ENCODE measurements at regions of chr11 and their contacts with region 1.

Region 1: GRCh38 chr11:11895672-11896071 is 53.9 kb downstream of the USP47 start:
- DNase-seq: no peak

Region 2: DNA sequence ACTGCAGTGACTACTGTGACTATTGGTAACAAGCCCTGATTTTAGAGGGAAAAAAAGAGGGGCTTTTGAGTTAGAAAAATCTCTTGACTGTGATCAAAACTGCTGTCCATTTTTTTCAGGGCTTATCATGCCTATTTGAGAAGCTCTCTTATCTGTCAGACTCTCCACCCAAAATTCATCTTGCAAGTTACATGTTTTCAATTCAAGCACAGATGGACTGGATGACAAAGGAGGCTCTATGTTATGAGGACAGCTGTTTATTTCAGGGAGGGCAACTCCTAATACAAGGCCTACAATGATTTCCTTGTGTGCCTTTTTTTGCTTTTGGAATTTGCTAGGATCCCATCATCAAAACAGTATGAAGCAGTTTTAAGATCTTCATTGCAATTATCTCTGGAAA is 89.1 kb before region 1 on chr11:
- intact Hi-C with region 1: loop called in 1 of 2 experiments (anchors 10 kb)
- DNase-seq: no peak

Region 3: DNA sequence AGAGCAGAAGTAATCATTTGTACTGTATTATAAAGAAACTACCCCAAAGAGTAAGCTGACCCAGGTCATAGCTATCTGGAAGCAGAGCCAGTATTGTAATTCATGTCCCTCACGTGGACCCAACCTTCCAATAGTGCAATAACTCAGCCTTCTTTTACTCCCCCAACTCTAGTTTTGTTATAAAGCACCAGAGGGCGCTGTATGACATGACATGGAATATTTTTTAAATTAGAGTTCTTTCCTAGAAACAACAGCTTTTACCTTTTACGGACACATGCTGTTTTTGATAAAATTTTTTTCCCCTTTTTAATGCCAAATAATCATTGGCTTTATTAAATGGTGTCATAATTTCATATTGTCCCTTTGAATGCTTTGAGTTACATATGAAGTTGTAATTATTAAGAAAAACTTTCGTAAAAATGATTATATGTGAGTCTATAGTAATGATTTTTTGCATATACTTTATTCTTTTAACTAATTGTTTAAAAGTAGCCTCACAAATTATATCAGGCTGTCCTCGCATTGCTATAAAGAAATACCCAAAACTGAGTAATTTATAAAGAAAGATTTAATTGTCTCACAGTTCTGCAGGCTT is 35.9 kb after region 1 on chr11:
- intact Hi-C with region 1: loop called in 1 of 2 experiments (anchors 1 kb)
- DNase-seq: no peak

Region 4: GRCh38 chr11:12167098-12168000 is 271.7 kb after region 1 on chr11:
- intact Hi-C with region 1: no loop called
- DNase-seq: no peak

Measured in posterior vena cava (tissue), 2 donors.